Aorta (tissue), 5 donors: ENCODE measurements at regions of chr6 and their contacts with region 1.

Region 1: GRCh38 chr6:82363351-82364086 is at the start of gene TPBG:
- DNase-seq: peak; percentile 67 to 88
- ATAC-seq: peak; percentile 82
- H3K4me3 ChIP-seq: peak within 1 kb of the TSS; percentile 85 to 95
- H3K27ac ChIP-seq: peak within 1 kb of the TSS; percentile 8 to 38
- H3K4me1 ChIP-seq: peaks cover 0 to 2% of the 10 kb centered on the region in 2 donors
- H3K27me3 ChIP-seq: no peaks in the 10 kb centered on the region
- total RNA-seq, gene TPBG: 20.1 to 27.6 TPM

Region 2: GRCh38 chr6:82247634-82248232 is 115.8 kb before region 1 on chr6 and contains the start of gene IBTK:
- intact Hi-C with region 1: loop called in 1 of 2 experiments (anchors 10 kb)
- DNase-seq: peak; percentile 96 to 98
- ATAC-seq: peak; percentile 99
- H3K4me3 ChIP-seq: peak within 1 kb of the TSS; percentile 48 to 88
- H3K27ac ChIP-seq: peak within 1 kb of the TSS; percentile 71 to 90
- H3K4me1 ChIP-seq: no peaks in the 10 kb centered on the region
- H3K27me3 ChIP-seq: no peaks in the 10 kb centered on the region
- total RNA-seq, gene IBTK: 33.5 to 34.0 TPM

Region 3: DNA sequence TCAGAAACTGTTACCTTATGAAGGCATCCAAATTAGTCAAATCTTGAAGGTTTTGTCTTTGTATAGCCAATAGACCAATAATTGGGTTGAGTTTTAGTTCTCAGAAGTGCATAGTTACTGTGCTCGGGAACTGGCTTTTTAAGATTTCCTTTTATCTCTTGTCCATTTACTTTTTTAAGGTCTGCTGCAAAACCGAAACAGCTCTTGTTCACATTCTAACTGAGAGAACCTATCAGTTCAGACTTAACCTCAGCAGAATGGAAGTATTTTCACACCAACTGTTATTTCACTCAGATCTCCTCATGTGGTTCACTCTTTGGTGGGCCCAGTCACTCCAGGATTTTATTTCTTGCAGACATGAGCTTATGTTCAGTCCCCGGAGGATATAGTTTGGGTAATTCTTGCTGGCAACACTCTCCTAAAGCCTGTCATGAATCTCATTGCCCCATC is 55.6 kb after region 1 on chr6:
- intact Hi-C with region 1: loop called in 1 of 2 experiments (anchors 5 kb)
- DNase-seq: no peak
- ATAC-seq: no peak
- H3K4me3 ChIP-seq: no peak overlapping the region
- H3K27ac ChIP-seq: no peak overlapping the region
- H3K4me1 ChIP-seq: no peaks in the 10 kb centered on the region
- H3K27me3 ChIP-seq: no peaks in the 10 kb centered on the region